ENCODE measurements at regions of chr11 and their contacts with region 1.

Region 1: GRCh38 chr11:120108154-120108865 is 29.6 kb downstream of the TRIM29 start:
- DNase-seq: peak; percentile 46 to 94
- H3K4me3 ChIP-seq: no peak overlapping the region
- H3K27ac ChIP-seq: no peak overlapping the region
- H3K4me1 ChIP-seq: peaks cover 2 to 12% (median 7%) of the 10 kb centered on the region in 4 experiments
- H3K27me3 ChIP-seq: peaks cover 0 to 2% (median 1%) of the 10 kb centered on the region in 4 experiments; a peak in 2 of 7 replicates
- CTCF ChIP-seq: peak; percentile 98 to 99 (median 98)
- EP300 ChIP-seq: no peak
- POLR2A ChIP-seq: no peak
- RAD21 ChIP-seq: peak; percentile 100

Region 2: GRCh38 chr11:119641983-119642745 is 466.1 kb before region 1 on chr11:
- CTCF ChIA-PET with region 1: interaction called, 13 read pairs
- POLR2A ChIA-PET with region 1: no interaction called
- DNase-seq: no peak
- H3K4me3 ChIP-seq: no peak overlapping the region
- H3K27ac ChIP-seq: no peak overlapping the region
- H3K4me1 ChIP-seq: peaks cover 0 to 4% (median 0%) of the 10 kb centered on the region in 4 experiments; a peak in 2 of 7 replicates
- H3K27me3 ChIP-seq: no peaks in the 10 kb centered on the region; a peak in 1 of 7 replicates
- CTCF ChIP-seq: peak; percentile 73 to 83 (median 75)
- EP300 ChIP-seq: no peak
- POLR2A ChIP-seq: no peak
- RAD21 ChIP-seq: peak; percentile 68 to 82

Region 3: GRCh38 chr11:119975561-119976152 is 132.7 kb before region 1 on chr11:
- CTCF ChIA-PET with region 1: interaction called, 16 read pairs
- POLR2A ChIA-PET with region 1: no interaction called
- DNase-seq: peak; percentile 39 to 70
- H3K4me3 ChIP-seq: no peak overlapping the region
- H3K27ac ChIP-seq: no peak overlapping the region; the same call in 1 of the 2 replicates
- H3K4me1 ChIP-seq: peaks cover 2 to 15% (median 9%) of the 10 kb centered on the region in 4 experiments; a peak in 5 of 7 replicates
- H3K27me3 ChIP-seq: no peaks in the 10 kb centered on the region; a peak in 2 of 7 replicates
- CTCF ChIP-seq: no peak
- EP300 ChIP-seq: no peak
- POLR2A ChIP-seq: no peak
- RAD21 ChIP-seq: 0 out of 4 replicates have a peak, but pooled peaks have one; percentile 1 to 4

Region 4: GRCh38 chr11:120013325-120014270 is 94.7 kb before region 1 on chr11:
- CTCF ChIA-PET with region 1: interaction called, 146 read pairs
- POLR2A ChIA-PET with region 1: interaction called, 3 read pairs
- DNase-seq: peak; percentile 81 to 89
- H3K4me3 ChIP-seq: peak overlapping the region in 1 of 4 experiments; percentile 34; a peak in 2 of 8 replicates
- H3K27ac ChIP-seq: no peak overlapping the region
- H3K4me1 ChIP-seq: peaks cover 8 to 24% (median 14%) of the 10 kb centered on the region in 4 experiments
- H3K27me3 ChIP-seq: peaks cover 0 to 5% (median under 1%) of the 10 kb centered on the region in 4 experiments; a peak in 3 of 7 replicates
- CTCF ChIP-seq: peak; percentile 92 to 96 (median 93)
- EP300 ChIP-seq: peak in 1 of 2 experiments; percentile 40; a peak in 1 of 3 replicates
- POLR2A ChIP-seq: no peak
- RAD21 ChIP-seq: peak; percentile 89 to 94

Region 5: GRCh38 chr11:120043328-120043945 is 64.9 kb before region 1 on chr11:
- CTCF ChIA-PET with region 1: no interaction called
- POLR2A ChIA-PET with region 1: no interaction called
- DNase-seq: peak in 1 of 2 experiments; percentile 37
- H3K4me3 ChIP-seq: no peak overlapping the region
- H3K27ac ChIP-seq: no peak overlapping the region
- H3K4me1 ChIP-seq: peaks cover 0 to 4% (median 3%) of the 10 kb centered on the region in 4 experiments; a peak in 3 of 7 replicates
- H3K27me3 ChIP-seq: no peaks in the 10 kb centered on the region; a peak in 2 of 7 replicates
- CTCF ChIP-seq: no peak
- EP300 ChIP-seq: no peak
- POLR2A ChIP-seq: no peak
- RAD21 ChIP-seq: no peak

Region 6: GRCh38 chr11:120121871-120122473 is 13.7 kb after region 1 on chr11:
- CTCF ChIA-PET with region 1: interaction called, 26 read pairs
- POLR2A ChIA-PET with region 1: no interaction called
- DNase-seq: no peak
- H3K4me3 ChIP-seq: no peak overlapping the region
- H3K27ac ChIP-seq: no peak overlapping the region
- H3K4me1 ChIP-seq: peaks cover 0 to 3% (median 2%) of the 10 kb centered on the region in 4 experiments; a peak in 3 of 7 replicates
- H3K27me3 ChIP-seq: no peaks in the 10 kb centered on the region; a peak in 2 of 7 replicates
- CTCF ChIP-seq: no peak
- EP300 ChIP-seq: no peak
- POLR2A ChIP-seq: no peak
- RAD21 ChIP-seq: no peak

Region 7: GRCh38 chr11:120303004-120303637 is 194.8 kb after region 1 on chr11:
- CTCF ChIA-PET with region 1: interaction called, 12 read pairs
- POLR2A ChIA-PET with region 1: no interaction called
- DNase-seq: peak; percentile 64 to 87
- H3K4me3 ChIP-seq: no peak overlapping the region
- H3K27ac ChIP-seq: no peak overlapping the region
- H3K4me1 ChIP-seq: peaks cover 0 to 14% (median 8%) of the 10 kb centered on the region in 4 experiments; a peak in 6 of 7 replicates
- H3K27me3 ChIP-seq: peaks cover 0 to 4% (median 0%) of the 10 kb centered on the region in 4 experiments; a peak in 2 of 7 replicates
- CTCF ChIP-seq: peak; percentile 96 to 100 (median 100)
- EP300 ChIP-seq: no peak
- POLR2A ChIP-seq: no peak
- RAD21 ChIP-seq: peak; percentile 87 to 92